Sigmoid colon (tissue), 7 donors: ENCODE measurements at regions of chr3 and their contacts with region 1.

Region 1: GRCh38 chr3:170307671-170308403 is 49.7 kb upstream of the SKIL start:
- DNase-seq: no peak
- H3K4me3 ChIP-seq: no peak overlapping the region
- H3K27ac ChIP-seq: no peak overlapping the region
- H3K4me1 ChIP-seq: peaks cover 0 to 7% (median 0%) of the 10 kb centered on the region in 4 donors
- H3K27me3 ChIP-seq: no peaks in the 10 kb centered on the region
- CTCF ChIP-seq: no peak
- EP300 ChIP-seq: no peak
- POLR2A ChIP-seq: no peak

Region 2: GRCh38 chr3:170372190-170372879 is 64.5 kb after region 1 on chr3:
- intact Hi-C with region 1: loop called (anchors 5 kb)
- DNase-seq: no peak
- H3K4me3 ChIP-seq: no peak overlapping the region
- H3K27ac ChIP-seq: no peak overlapping the region
- H3K4me1 ChIP-seq: peaks cover 0 to 37% (median 8%) of the 10 kb centered on the region in 4 donors
- H3K27me3 ChIP-seq: no peaks in the 10 kb centered on the region
- CTCF ChIP-seq: no peak
- EP300 ChIP-seq: no peak
- POLR2A ChIP-seq: no peak

Region 3: DNA sequence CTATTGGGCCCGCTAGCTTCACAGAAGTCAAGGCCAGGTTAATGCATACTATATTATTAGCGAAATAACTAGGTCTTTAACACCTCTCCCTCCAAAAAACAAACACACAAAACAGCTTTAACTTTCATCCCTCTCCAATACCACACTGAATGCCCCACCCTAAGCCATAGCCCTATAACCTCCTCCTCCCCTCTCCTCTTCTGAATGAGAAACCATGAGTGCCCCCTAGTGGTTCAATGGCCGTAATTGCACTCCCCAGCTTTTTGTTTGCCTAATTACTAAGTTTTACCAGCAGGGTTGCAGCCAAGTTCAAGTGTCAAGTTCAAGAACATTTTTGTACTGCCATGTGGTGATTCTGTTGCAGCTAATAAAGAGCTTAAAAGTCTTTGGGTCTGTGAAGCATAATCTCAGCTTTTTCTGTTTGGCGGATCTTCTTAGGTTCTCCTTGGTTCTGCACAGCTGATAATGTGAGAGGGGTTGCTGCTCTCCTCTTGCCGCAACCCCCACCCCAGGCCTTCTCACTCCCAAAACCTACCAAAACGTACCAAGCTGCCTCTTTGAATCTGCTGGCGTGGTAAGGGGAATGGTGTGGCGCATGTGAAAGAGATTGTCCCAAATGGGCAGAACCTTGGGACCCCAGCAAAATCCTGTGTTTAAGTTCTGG is 504.2 kb after region 1 on chr3:
- intact Hi-C with region 1: loop called (anchors 5 kb)
- DNase-seq: peak; percentile 82
- H3K4me3 ChIP-seq: no peak overlapping the region
- H3K27ac ChIP-seq: peak overlapping the region in 1 of 4 donors; percentile 22
- H3K4me1 ChIP-seq: peaks cover 0 to 11% (median 2%) of the 10 kb centered on the region in 4 donors
- H3K27me3 ChIP-seq: no peaks in the 10 kb centered on the region
- CTCF ChIP-seq: peak; percentile 72 to 91 (median 86)
- EP300 ChIP-seq: no peak
- POLR2A ChIP-seq: no peak